Activated CD8-positive, alpha-beta memory T cell treated with anti-CD3 and anti-CD28 coated beads, Interleukin-2, amount 10 ng/mL, durations not matched to agents 7 days and 5 days (primary cell): ENCODE measurements at regions of chr10 and their contacts with region 1.

Region 1: GRCh38 chr10:70221030-70221429 is 12.2 kb downstream of the PPA1 start:
- DNase-seq: no peak
- ATAC-seq: no peak
- H3K4me3 Mint-ChIP-seq: no peak overlapping the region
- H3K27ac Mint-ChIP-seq: peak overlapping the region; percentile 83
- H3K4me1 Mint-ChIP-seq: peaks cover 45% of the 10 kb centered on the region
- H3K27me3 Mint-ChIP-seq: no peaks in the 10 kb centered on the region

Region 2: GRCh38 chr10:70233109-70233938 is 12.3 kb after region 1 on chr10 and contains the start of gene PPA1:
- CTCF ChIA-PET with region 1: interaction called, 45 read pairs
- DNase-seq: peak; percentile 99
- ATAC-seq: peak; percentile 96
- H3K4me3 Mint-ChIP-seq: peak within 1 kb of the TSS; percentile 88
- H3K27ac Mint-ChIP-seq: peak within 1 kb of the TSS; percentile 89
- H3K4me1 Mint-ChIP-seq: peaks cover 44% of the 10 kb centered on the region
- H3K27me3 Mint-ChIP-seq: no peaks in the 10 kb centered on the region
- total RNA-seq, gene PPA1: 157 to 192 TPM

Region 3: DNA sequence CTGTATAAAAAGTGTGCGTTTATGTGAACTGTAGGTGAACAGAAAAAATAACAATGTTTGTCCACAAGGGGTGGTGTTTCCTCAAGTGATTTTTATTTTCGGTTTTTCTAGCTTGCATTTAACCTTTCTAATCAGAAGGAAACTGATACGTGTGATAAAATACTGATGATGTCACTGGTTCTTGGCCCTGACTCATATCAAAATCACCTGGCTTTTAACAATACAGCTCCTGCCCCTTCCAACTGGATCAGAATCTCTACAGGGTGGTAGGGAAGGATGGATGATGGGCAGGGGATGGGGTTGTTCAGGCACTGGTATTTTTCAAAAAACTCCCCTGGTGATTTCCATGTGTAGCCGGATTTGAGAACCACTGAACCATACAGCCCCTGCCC is 51.9 kb after region 1 on chr10:
- CTCF ChIA-PET with region 1: interaction called, 14 read pairs
- DNase-seq: no peak
- ATAC-seq: peak; percentile 89
- H3K4me3 Mint-ChIP-seq: peak overlapping the region; percentile 23
- H3K27ac Mint-ChIP-seq: peak overlapping the region; percentile 45
- H3K4me1 Mint-ChIP-seq: peaks cover 18% of the 10 kb centered on the region
- H3K27me3 Mint-ChIP-seq: no peaks in the 10 kb centered on the region

Region 4: GRCh38 chr10:70348228-70348850 is 127.3 kb after region 1 on chr10:
- CTCF ChIA-PET with region 1: interaction called, 512 read pairs
- DNase-seq: peak; percentile 64
- ATAC-seq: peak; percentile 77
- H3K4me3 Mint-ChIP-seq: no peak overlapping the region
- H3K27ac Mint-ChIP-seq: no peak overlapping the region
- H3K4me1 Mint-ChIP-seq: peaks cover 8% of the 10 kb centered on the region
- H3K27me3 Mint-ChIP-seq: no peaks in the 10 kb centered on the region

Region 5: GRCh38 chr10:70381471-70382421 is 160.7 kb after region 1 on chr10:
- CTCF ChIA-PET with region 1: interaction called, 12 read pairs
- DNase-seq: peak; percentile 65
- ATAC-seq: peak; percentile 52
- H3K4me3 Mint-ChIP-seq: peak overlapping the region; percentile 81
- H3K27ac Mint-ChIP-seq: peak overlapping the region; percentile 19
- H3K4me1 Mint-ChIP-seq: peaks cover 11% of the 10 kb centered on the region
- H3K27me3 Mint-ChIP-seq: no peaks in the 10 kb centered on the region

Region 6: DNA sequence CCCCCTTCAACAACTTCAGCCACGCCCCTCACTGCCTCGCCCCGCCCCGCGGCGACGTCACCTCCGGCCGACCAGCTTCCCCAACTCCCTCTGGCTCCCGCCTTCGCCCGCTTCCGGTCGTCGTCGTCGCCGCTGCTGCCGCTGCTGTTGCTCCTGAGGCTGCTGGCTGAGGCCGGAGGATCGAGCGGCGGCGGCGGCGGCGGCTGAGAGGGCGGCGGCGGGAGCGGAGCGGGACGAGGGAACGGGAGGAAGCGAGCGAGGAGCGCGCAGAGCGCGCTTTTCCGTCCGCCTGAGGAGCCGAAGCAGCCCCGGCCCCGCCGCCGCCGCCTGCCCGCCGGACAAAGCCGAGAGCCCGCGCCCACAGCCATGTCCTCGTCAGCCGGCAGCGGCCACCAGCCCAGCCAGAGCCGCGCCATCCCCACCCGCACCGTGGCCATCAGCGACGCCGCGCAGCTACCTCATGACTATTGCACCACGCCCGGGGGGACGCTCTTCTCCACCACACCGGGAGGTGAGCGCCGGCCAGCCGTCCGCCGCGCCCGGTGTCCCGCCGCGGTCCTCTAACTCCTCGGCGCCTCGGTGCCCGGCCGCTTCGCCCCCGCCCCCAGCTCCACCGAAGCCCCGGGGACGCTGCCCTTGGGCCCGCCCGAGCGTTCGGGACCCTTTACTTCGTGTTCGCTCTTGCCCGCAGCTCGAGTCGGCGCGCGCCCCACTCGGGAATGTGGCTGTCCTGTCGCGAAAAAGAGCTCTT is 183.2 kb after region 1 on chr10 and contains the start of gene EIF4EBP2:
- CTCF ChIA-PET with region 1: interaction called, 18 read pairs
- DNase-seq: peak; percentile 98
- ATAC-seq: peak; percentile 93
- H3K4me3 Mint-ChIP-seq: peak within 1 kb of the TSS; percentile 95
- H3K27ac Mint-ChIP-seq: peak within 1 kb of the TSS; percentile 90
- H3K4me1 Mint-ChIP-seq: peaks cover 34% of the 10 kb centered on the region
- H3K27me3 Mint-ChIP-seq: no peaks in the 10 kb centered on the region
- total RNA-seq, gene EIF4EBP2: 37.8 to 51.7 TPM

Region 7: GRCh38 chr10:70584909-70585544 is 364.0 kb after region 1 on chr10:
- CTCF ChIA-PET with region 1: no interaction called
- DNase-seq: no peak
- ATAC-seq: no peak
- H3K4me3 Mint-ChIP-seq: no peak overlapping the region
- H3K27ac Mint-ChIP-seq: peak overlapping the region; percentile 7
- H3K4me1 Mint-ChIP-seq: peaks cover 21% of the 10 kb centered on the region
- H3K27me3 Mint-ChIP-seq: peaks cover 11% of the 10 kb centered on the region